WTC11 (cell line): ENCODE measurements at regions of chr4 and their contacts with region 1.

Region 1: GRCh38 chr4:7124689-7125442 is 57.0 kb upstream of the GRPEL1 start:
- DNase-seq: no peak
- ATAC-seq: peak; percentile 49
- H3K4me3 Mint-ChIP-seq: no peak overlapping the region
- H3K27ac Mint-ChIP-seq: no peak overlapping the region
- H3K4me1 Mint-ChIP-seq: no peaks in the 10 kb centered on the region
- H3K27me3 Mint-ChIP-seq: no peaks in the 10 kb centered on the region
- CTCF ChIP-seq: no peak

Region 2: GRCh38 chr4:7101692-7102515 is 23.0 kb before region 1 on chr4:
- CTCF ChIA-PET with region 1: interaction called, 19 read pairs
- POLR2A ChIA-PET with region 1: no interaction called
- DNase-seq: peak; percentile 82
- ATAC-seq: peak; percentile 87
- H3K4me3 Mint-ChIP-seq: peak overlapping the region; percentile 89
- H3K27ac Mint-ChIP-seq: no peak overlapping the region
- H3K4me1 Mint-ChIP-seq: peaks cover 15% of the 10 kb centered on the region
- H3K27me3 Mint-ChIP-seq: peaks cover 85% of the 10 kb centered on the region
- CTCF ChIP-seq: peak; percentile 41; the same call in 1 of the 2 replicates